Activated CD8-positive, alpha-beta T cell treated with anti-CD3 and anti-CD28 coated beads, Interleukin-2, amount 10 ng/mL, durations not matched to agents 7 days and 5 days (primary cell): ENCODE measurements at regions of chr10 and their contacts with region 1.

Region 1: DNA sequence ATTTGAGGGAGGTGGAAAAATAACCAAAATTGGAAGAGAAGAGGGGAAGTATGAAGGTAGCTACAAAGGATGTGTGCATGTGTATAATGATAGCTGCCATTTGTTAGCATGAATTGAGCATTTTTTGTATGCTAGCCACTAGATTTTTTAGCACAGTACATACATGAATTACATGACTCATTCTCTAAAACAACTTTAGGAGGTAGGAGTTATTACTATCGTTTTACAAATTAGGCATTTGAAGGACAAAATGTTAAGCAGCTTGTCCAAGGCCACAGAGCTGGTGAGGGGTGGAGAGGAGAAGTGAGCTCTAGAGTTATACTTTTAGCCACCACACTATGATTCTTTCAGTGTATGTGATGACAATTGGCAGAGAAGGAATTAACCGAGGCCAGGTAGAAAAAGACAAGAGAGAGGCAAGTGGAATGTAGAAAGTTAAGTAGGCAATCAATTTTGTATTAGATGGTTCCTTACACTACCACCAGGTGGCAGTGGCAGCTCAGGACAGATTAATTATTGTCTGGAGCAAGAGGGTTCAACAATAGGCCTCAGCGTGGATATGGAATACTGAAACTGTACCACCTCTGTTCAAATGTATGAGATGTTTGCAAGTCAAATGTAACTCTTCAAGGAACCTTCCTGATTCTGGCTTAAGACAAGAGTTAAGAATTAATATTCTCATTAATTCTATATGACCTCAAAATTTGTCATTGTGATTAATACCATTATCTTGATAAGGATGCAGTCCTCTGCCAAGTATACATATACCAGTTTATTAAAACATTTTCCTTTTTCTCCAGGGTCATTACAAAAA is 128.0 kb downstream of the MBL2 start:
- DNase-seq: peak; percentile 40
- ATAC-seq: no peak
- H3K4me3 Mint-ChIP-seq: no peak overlapping the region
- H3K27ac Mint-ChIP-seq: no peak overlapping the region
- H3K4me1 Mint-ChIP-seq: peaks cover 1% of the 10 kb centered on the region
- H3K27me3 Mint-ChIP-seq: no peaks in the 10 kb centered on the region

Region 2: DNA sequence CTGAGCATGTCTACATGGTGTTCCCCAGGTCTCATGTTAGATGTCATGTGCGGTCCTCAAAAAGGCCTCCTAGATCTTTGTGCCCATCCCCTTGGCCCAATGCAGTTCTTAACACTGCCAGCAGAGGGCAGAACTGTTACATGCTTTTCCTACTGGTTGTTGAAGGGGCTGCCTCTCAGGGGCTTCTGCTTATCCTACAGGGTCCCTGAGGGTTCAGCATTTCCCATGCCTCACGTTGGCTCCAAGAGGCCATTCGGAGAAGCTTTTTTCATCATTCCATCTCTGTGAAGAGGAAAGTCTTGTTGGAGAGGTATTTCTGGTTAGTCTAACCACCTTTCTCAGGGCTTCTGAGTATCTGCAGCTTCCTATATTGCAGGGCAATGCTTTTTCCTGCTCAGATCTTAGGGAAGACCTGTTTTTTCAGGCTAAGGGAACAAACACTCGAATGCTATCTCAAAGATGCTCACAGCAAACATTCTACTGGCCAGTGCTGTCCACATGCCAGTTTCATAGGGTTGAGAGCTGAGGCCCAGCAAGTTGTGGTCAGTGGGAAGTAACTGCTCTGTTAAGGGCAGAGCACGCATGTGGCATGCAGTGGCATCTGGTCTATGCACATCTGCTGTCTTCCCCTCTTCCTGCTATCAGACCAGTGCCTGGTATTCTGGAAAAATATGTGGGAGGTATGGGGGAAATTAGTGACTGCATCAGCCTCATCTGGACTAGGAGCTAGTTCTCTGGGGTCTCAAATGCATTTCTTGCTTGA is 96.5 kb after region 1 on chr10:
- CTCF ChIA-PET with region 1: no interaction called
- POLR2A ChIA-PET with region 1: no interaction called
- DNase-seq: peak; percentile 49
- ATAC-seq: no peak
- H3K4me3 Mint-ChIP-seq: no peak overlapping the region
- H3K27ac Mint-ChIP-seq: no peak overlapping the region
- H3K4me1 Mint-ChIP-seq: no peaks in the 10 kb centered on the region
- H3K27me3 Mint-ChIP-seq: no peaks in the 10 kb centered on the region

Region 3: GRCh38 chr10:52779541-52780390 is 135.2 kb after region 1 on chr10:
- CTCF ChIA-PET with region 1: interaction called, 11 read pairs
- POLR2A ChIA-PET with region 1: no interaction called
- DNase-seq: peak; percentile 53
- ATAC-seq: peak; percentile 61
- H3K4me3 Mint-ChIP-seq: no peak overlapping the region
- H3K27ac Mint-ChIP-seq: no peak overlapping the region
- H3K4me1 Mint-ChIP-seq: no peaks in the 10 kb centered on the region
- H3K27me3 Mint-ChIP-seq: no peaks in the 10 kb centered on the region